Ascending aorta (tissue), 2 donors: ENCODE measurements at regions of chr11 and their contacts with region 1.

Region 1: DNA sequence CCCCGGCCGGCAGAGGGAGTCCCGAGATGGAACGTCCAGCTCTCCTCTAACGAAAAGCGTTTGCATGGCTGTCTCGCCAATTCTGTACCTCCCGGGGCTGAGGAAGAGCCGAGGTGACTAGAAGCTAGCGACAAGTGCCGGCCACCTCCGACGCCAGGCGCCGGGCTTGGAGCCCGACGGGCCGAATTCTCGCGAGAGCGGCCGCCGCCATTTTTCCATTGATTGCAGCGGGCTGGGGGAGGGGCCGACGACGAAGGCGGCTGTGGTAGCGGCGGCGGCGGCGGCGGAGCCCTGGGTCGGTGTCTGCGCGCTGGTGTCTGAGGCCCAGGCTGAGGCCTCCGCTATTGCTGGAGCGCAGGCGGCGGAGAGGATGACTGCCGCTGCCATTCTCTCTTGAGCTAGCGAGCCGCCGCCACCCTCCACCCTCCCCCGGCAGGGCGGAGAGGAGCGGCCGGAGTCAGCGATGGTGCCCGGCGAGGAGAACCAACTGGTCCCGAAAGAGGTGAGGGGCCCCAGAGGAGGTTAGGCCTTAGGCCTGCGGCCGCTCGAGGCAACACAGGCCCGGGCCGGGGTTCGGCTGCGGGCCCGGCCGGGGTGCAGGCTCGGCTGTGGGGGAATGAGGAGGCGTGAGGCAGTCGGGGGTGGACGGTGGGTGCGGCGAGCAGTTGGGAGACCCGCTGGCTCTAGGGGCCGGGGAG is at the start of gene USP47:
- DNase-seq: peak; percentile 37 to 94
- H3K4me3 ChIP-seq: peak within 1 kb of the TSS; percentile 67 to 84
- H3K27ac ChIP-seq: peak within 1 kb of the TSS; percentile 99
- H3K4me1 ChIP-seq: peaks cover 11 to 25% of the 10 kb centered on the region in 2 donors
- H3K27me3 ChIP-seq: no peaks in the 10 kb centered on the region
- CTCF ChIP-seq: peak; percentile 61 to 66 (median 65)
- total RNA-seq, gene USP47: 18.2 TPM

Region 2: GRCh38 chr11:11584446-11584810 is 257.4 kb before region 1 on chr11:
- intact Hi-C with region 1: no loop called
- DNase-seq: no peak
- H3K4me3 ChIP-seq: no peak overlapping the region
- H3K27ac ChIP-seq: peak overlapping the region; percentile 30 to 81
- H3K4me1 ChIP-seq: peaks cover 10 to 51% of the 10 kb centered on the region in 2 donors
- H3K27me3 ChIP-seq: no peaks in the 10 kb centered on the region
- CTCF ChIP-seq: no peak

Region 3: DNA sequence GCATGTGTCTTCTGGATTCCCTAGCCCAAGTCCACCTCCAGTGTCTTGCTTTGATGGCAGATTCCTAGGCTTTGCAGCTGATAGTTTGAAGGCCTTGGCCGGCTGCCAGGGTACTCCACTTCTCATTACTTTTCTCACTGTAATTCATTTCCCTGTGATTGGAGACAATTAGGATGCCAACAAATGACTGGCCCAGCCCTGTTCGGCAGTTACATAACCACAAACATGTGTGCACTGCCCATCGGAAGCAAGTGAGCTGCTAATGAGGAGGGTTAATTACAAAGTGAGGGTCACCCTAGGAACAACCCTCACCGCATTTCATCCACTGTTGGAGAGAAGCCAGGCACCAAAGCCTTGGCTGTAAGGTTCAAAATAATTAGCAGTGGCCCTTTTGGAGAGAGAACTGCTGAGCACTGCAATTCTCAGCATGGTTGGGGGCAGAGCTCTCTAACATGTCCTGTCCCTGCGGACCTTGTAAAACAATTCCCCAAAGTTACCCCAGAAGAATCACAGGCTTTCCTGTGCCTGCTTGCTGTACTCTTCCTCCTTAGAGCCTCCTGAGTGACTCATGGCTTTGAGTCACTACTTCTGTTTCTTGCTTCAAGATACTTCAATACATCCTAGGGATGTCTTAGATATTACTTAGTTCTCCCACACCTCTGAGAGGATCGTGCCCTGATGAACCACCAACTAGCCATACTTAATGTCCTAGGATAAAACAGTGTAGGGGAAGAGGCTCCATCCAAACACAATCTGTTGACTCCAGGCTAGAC is 110.4 kb before region 1 on chr11:
- intact Hi-C with region 1: no loop called
- DNase-seq: no peak
- H3K4me3 ChIP-seq: no peak overlapping the region
- H3K27ac ChIP-seq: no peak overlapping the region
- H3K4me1 ChIP-seq: no peaks in the 10 kb centered on the region
- H3K27me3 ChIP-seq: no peaks in the 10 kb centered on the region
- CTCF ChIP-seq: no peak

Region 4: GRCh38 chr11:11798586-11799438 is 43.1 kb before region 1 on chr11:
- intact Hi-C with region 1: loop called (anchors 5 kb)
- DNase-seq: peak; percentile 51 to 93
- H3K4me3 ChIP-seq: no peak overlapping the region
- H3K27ac ChIP-seq: no peak overlapping the region
- H3K4me1 ChIP-seq: peaks cover 2 to 3% of the 10 kb centered on the region in 2 donors
- H3K27me3 ChIP-seq: no peaks in the 10 kb centered on the region
- CTCF ChIP-seq: peak; percentile 77 to 89 (median 80)

Region 5: GRCh38 chr11:11814614-11815452 is 27.0 kb before region 1 on chr11:
- intact Hi-C with region 1: loop called (anchors 2 kb)
- DNase-seq: no peak
- H3K4me3 ChIP-seq: no peak overlapping the region
- H3K27ac ChIP-seq: no peak overlapping the region
- H3K4me1 ChIP-seq: peaks cover 0 to 6% of the 10 kb centered on the region in 2 donors
- H3K27me3 ChIP-seq: no peaks in the 10 kb centered on the region
- CTCF ChIP-seq: no peak

Region 6: GRCh38 chr11:11916981-11917399 is 75.1 kb after region 1 on chr11:
- intact Hi-C with region 1: loop called (anchors 10 kb)
- DNase-seq: peak in 1 of 2 donors; percentile 65
- H3K4me3 ChIP-seq: no peak overlapping the region
- H3K27ac ChIP-seq: peak overlapping the region; percentile 27 to 41
- H3K4me1 ChIP-seq: peaks cover 0 to 8% of the 10 kb centered on the region in 2 donors
- H3K27me3 ChIP-seq: no peaks in the 10 kb centered on the region
- CTCF ChIP-seq: no peak